Activated CD4-positive, alpha-beta T cell treated with anti-CD3 and anti-CD28 coated beads, Interleukin-2, amount 10 ng/mL, durations not matched to agents 24 days and 14 days (primary cell): ENCODE measurements at regions of chr17 and their contacts with region 1.

Region 1: GRCh38 chr17:4004517-4005295 is 40.5 kb upstream of the ATP2A3 start:
- DNase-seq: peak; percentile 89
- H3K4me3 Mint-ChIP-seq: no peak overlapping the region
- H3K27ac Mint-ChIP-seq: no peak overlapping the region
- H3K4me1 Mint-ChIP-seq: peaks cover 7% of the 10 kb centered on the region
- H3K27me3 Mint-ChIP-seq: peaks cover 4% of the 10 kb centered on the region

Region 2: DNA sequence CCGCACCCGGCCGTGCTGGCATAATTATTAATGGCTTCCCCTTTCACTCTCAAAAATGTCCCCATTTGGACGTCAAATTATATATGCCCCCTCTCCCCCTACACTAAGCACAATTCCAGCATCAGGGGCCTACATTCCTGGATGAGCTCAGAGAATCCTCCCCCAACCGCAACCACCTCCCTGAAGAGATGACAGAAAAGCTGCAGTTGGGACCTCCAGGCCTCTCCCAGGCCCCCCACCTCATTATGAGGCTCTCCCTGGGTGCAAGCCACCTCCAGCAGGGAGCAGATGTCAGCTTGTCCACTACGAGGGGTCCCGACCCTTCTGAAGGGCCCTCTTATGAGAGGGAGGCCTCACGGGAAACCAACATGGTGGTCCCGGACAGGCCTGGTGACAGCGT is 140.2 kb before region 1 on chr17:
- intact Hi-C with region 1: loop called (anchors 1 kb)
- DNase-seq: no peak
- H3K4me3 Mint-ChIP-seq: no peak overlapping the region
- H3K27ac Mint-ChIP-seq: no peak overlapping the region
- H3K4me1 Mint-ChIP-seq: no peaks in the 10 kb centered on the region
- H3K27me3 Mint-ChIP-seq: no peaks in the 10 kb centered on the region

Region 3: GRCh38 chr17:4035081-4035680 is 30.5 kb after region 1 on chr17:
- intact Hi-C with region 1: no loop called
- DNase-seq: no peak
- H3K4me3 Mint-ChIP-seq: no peak overlapping the region
- H3K27ac Mint-ChIP-seq: no peak overlapping the region
- H3K4me1 Mint-ChIP-seq: no peaks in the 10 kb centered on the region
- H3K27me3 Mint-ChIP-seq: no peaks in the 10 kb centered on the region

Region 4: GRCh38 chr17:4796553-4796921 is 791.8 kb after region 1 on chr17:
- intact Hi-C with region 1: no loop called
- DNase-seq: peak; percentile 77
- H3K4me3 Mint-ChIP-seq: peak overlapping the region; percentile 99
- H3K27ac Mint-ChIP-seq: peak overlapping the region; percentile 98
- H3K4me1 Mint-ChIP-seq: peaks cover 21% of the 10 kb centered on the region
- H3K27me3 Mint-ChIP-seq: peaks cover 5% of the 10 kb centered on the region